ENCODE measurements at regions of chr16 and their contacts with region 1.

Region 1: DNA sequence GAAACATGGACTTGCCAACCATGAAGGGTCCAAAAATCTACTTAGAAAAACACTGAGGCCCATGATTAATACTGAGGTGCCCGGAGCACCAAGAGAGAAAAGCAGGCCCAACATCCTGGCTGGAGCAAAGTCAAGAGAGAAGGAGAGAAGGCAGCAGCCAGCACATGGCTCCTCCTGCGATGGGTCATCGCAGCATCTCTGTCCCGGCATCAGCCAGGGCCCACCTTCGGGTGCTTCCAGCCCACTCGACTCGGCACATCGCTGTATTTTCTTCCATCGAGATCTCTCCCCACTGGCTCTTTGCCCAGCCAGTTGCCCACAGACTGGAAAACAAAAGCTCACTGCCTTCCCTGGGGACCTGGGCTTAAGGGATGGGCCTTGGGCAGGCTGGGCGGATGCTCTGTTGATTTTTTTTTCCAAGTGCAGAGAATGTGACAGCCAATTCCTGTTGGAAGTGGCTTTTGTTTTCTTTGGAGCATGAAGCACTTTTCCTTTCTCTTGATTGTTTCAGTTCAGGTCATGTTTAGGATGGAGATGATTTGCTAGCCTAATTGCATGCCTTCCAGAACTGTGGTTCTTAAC is 58.1 kb downstream of the CYB5B start:
- DNase-seq: peak in 1 of 2 donors; percentile 79
- H3K4me3 ChIP-seq: peak overlapping the region in 1 of 2 donors; percentile 55
- H3K27ac ChIP-seq: peak overlapping the region; percentile 85 to 88
- H3K4me1 ChIP-seq: peaks cover 2 to 13% of the 10 kb centered on the region in 2 donors
- H3K27me3 ChIP-seq: no peaks in the 10 kb centered on the region
- CTCF ChIP-seq: no peak

Region 2: DNA sequence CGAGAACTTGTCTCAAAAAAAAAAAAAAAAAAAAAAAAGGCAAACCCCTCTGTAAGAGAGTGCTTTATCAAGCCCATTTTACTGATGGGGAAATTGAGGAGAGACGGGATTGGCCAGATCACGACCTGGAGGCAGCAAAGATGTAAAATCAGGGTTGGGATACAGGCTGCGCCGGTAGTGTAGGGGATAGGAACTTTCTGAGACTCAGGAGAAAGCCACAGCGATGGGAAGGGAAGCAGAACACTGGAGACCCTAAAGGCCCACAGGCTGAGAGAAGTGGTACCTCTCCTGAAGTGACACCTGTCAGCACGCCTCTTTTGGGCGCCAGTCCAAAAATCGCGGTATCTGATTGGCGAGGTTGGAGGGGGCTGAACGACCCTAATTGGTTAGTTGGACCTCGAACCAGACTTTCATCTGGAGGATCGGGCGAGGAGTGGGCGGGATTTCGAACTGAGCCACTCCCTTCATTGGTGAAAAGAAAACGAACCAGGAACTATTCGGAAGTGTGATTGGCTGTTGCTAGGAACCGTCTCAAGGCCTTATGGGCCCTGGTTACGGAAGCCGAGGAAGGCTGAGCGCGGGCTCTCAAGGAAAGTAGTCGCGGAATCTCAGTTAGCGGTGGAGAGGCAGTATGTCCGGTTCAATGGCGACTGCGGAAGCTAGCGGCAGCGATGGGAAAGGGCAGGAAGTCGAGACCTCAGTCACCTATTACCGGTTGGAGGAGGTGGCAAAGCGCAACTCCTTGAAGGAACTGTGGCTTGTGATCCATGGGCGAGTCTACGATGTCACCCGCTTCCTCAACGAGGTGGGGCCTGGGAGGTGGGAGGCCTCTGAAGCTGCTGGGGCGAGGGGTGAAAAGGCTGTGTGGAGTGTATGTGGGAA is 58.2 kb before region 1 on chr16 and contains the start of gene CYB5B:
- intact Hi-C with region 1: loop called (anchors 1 kb)
- DNase-seq: peak; percentile 89 to 97
- H3K4me3 ChIP-seq: peak within 1 kb of the TSS; percentile 80 to 93
- H3K27ac ChIP-seq: peak within 1 kb of the TSS; percentile 65 to 85
- H3K4me1 ChIP-seq: no peaks in the 10 kb centered on the region
- H3K27me3 ChIP-seq: no peaks in the 10 kb centered on the region
- CTCF ChIP-seq: no peak
- total RNA-seq, gene CYB5B: 19.2 TPM

Region 3: GRCh38 chr16:69443927-69444631 is 38.4 kb before region 1 on chr16:
- intact Hi-C with region 1: loop called (anchors 5 kb)
- DNase-seq: no peak
- H3K4me3 ChIP-seq: peak overlapping the region; percentile 43 to 54
- H3K27ac ChIP-seq: peak overlapping the region; percentile 76 to 80
- H3K4me1 ChIP-seq: peaks cover 0 to 21% of the 10 kb centered on the region in 2 donors
- H3K27me3 ChIP-seq: no peaks in the 10 kb centered on the region
- CTCF ChIP-seq: no peak